Testis (tissue), 5 donors: ENCODE measurements at regions of chr2 and their contacts with region 1.

Region 1: GRCh38 chr2:229273723-229274338 is 2.7 kb upstream of the PID1 start:
- DNase-seq: peak; percentile 69
- H3K4me3 ChIP-seq: peak overlapping the region in 1 of 2 donors; percentile 33
- H3K27ac ChIP-seq: no peak overlapping the region
- H3K4me1 ChIP-seq: no peaks in the 10 kb centered on the region
- H3K27me3 ChIP-seq: no peaks in the 10 kb centered on the region
- CTCF ChIP-seq: peak; percentile 61 to 77 (median 76)
- POLR2A ChIP-seq: no peak

Region 2: GRCh38 chr2:228700638-228701037 is 573.2 kb before region 1 on chr2:
- intact Hi-C with region 1: loop called (anchors 10 kb)
- DNase-seq: no peak
- H3K4me3 ChIP-seq: no peak overlapping the region
- H3K27ac ChIP-seq: no peak overlapping the region
- H3K4me1 ChIP-seq: no peaks in the 10 kb centered on the region
- H3K27me3 ChIP-seq: no peaks in the 10 kb centered on the region
- CTCF ChIP-seq: no peak
- POLR2A ChIP-seq: no peak

Region 3: GRCh38 chr2:229586746-229587705 is 313.2 kb after region 1 on chr2:
- intact Hi-C with region 1: loop called (anchors 10 kb)
- DNase-seq: peak; percentile 92
- H3K4me3 ChIP-seq: peak overlapping the region; percentile 13 to 44
- H3K27ac ChIP-seq: peak overlapping the region in 1 of 2 donors; percentile 51
- H3K4me1 ChIP-seq: peaks cover 6% of the 10 kb centered on the region
- H3K27me3 ChIP-seq: no peaks in the 10 kb centered on the region
- CTCF ChIP-seq: peak; percentile 72 to 82 (median 80)
- POLR2A ChIP-seq: no peak